Endothelial cell of umbilical vein (primary cell): ENCODE measurements at regions of chr1 and their contacts with region 1.

Region 1: DNA sequence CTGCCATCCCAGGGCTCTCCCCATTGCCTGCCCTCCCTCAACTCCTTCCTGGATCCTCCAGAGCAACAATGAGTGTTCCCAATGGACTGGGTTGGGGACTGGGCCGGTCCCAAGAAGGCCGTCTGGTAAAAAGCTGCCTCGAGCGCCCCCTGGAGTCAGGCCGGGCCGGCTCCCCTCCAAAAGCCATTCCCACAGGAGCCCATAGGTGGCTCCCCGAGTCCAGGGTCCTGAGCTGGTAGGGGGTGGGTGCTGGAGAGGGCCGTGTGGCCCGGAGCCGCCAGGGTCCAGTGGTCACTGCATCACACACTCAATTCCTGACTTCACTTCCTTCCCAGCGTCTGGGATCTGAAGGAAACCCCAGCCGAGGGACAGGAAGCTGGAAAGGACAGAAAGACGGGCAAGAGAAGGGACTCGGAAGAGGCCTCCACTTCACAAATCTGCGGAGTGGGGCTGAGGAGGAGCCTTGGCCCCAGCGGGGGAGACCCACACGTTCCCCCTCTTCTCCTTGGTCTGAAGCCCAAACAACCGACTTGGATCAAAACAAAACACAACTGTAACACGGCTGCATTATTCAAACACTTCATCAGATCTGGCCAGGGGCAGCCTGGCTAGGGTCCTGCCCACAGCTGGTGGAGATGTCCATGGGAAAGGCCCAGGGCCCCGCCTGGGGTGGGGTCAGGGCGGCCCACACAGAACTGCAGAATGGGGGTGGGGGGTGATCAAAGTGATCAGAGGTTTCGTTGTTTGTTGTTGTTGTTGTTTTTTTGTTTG is 10.9 kb upstream of the ALDH4A1 start:
- DNase-seq: peak; percentile 89
- H3K4me3 ChIP-seq: no peak overlapping the region
- H3K27ac ChIP-seq: peak overlapping the region; percentile 96
- H3K4me1 ChIP-seq: peaks cover 11% of the 10 kb centered on the region
- H3K27me3 ChIP-seq: no peaks in the 10 kb centered on the region
- CTCF ChIP-seq: peak; percentile 100
- POLR2A ChIP-seq: no peak

Region 2: DNA sequence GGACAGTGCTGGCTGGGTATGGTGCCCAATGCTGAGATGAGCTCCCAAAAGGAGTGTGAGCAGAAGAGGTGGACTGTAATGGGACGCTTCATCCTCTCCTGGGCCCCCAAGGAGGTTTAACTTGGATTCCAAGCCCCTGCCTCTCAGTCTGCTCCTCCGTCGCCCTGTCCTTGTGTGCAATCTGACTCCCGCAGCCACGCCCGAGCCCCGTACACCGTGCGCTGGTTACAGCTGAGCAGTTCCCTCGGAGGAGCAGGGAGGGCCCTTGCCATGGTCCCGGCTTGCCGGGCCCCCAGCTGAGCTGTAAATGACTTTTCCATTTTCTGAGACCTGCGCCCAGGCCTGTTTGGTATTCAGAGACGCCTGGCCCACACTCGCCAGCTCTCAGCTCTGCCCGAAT is 228.9 kb before region 1 on chr1:
- CTCF ChIA-PET with region 1: no interaction called
- POLR2A ChIA-PET with region 1: no interaction called
- dilution Hi-C with region 1: no loop called
- intact Hi-C with region 1: no loop called
- DNase-seq: no peak
- H3K4me3 ChIP-seq: no peak overlapping the region
- H3K27ac ChIP-seq: no peak overlapping the region
- H3K4me1 ChIP-seq: no peaks in the 10 kb centered on the region
- H3K27me3 ChIP-seq: no peaks in the 10 kb centered on the region
- CTCF ChIP-seq: no peak
- POLR2A ChIP-seq: no peak

Region 3: GRCh38 chr1:18854331-18855025 is 58.8 kb before region 1 on chr1:
- CTCF ChIA-PET with region 1: no interaction called
- POLR2A ChIA-PET with region 1: no interaction called
- dilution Hi-C with region 1: no loop called
- intact Hi-C with region 1: no loop called
- DNase-seq: no peak
- H3K4me3 ChIP-seq: no peak overlapping the region
- H3K27ac ChIP-seq: no peak overlapping the region
- H3K4me1 ChIP-seq: no peaks in the 10 kb centered on the region
- H3K27me3 ChIP-seq: no peaks in the 10 kb centered on the region
- CTCF ChIP-seq: no peak
- POLR2A ChIP-seq: no peak

Region 4: DNA sequence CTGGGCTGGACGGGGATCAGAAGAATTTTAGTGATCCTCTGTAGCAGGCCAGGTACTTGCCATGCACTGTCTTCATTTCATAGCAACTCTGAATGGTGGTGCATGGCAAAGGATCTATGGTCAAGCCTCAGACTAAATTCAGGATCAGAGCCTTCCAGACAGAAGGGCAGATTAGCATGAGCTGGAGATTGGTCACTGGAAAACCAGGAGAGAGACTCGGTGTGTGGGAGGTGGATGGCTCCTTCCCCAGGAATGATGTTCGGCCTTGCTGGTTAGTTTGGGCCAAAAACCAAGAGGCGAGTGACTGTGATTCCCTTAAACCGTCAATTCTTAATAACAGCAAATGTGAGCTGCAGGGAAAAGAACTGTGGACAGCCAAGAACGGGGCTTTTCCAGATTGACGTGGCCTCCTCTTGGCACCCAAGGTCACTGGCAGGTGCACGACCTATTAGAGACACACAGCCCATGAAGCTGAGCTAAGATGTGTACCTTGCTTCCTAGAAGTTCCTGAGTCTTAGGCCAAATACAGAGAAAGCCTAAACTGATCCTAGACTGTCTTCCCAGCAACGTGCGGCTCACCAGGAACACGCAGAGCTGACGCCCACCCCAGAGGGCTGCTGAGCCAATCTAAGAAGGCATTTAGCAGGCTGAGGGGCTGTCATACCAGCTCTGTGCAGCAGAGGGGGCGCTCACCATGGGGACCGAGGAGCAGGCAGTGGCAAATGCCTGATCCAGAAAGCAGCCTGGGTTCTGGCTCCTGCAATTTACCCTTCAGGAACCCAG is 29.4 kb before region 1 on chr1:
- CTCF ChIA-PET with region 1: interaction called, 37 read pairs
- POLR2A ChIA-PET with region 1: no interaction called
- dilution Hi-C with region 1: no loop called
- intact Hi-C with region 1: loop called (anchors 1 kb)
- DNase-seq: peak; percentile 78
- H3K4me3 ChIP-seq: no peak overlapping the region
- H3K27ac ChIP-seq: no peak overlapping the region
- H3K4me1 ChIP-seq: no peaks in the 10 kb centered on the region
- H3K27me3 ChIP-seq: no peaks in the 10 kb centered on the region
- CTCF ChIP-seq: peak; percentile 81 to 95
- POLR2A ChIP-seq: no peak

Region 5: GRCh38 chr1:18941221-18942141 is 28.2 kb after region 1 on chr1:
- CTCF ChIA-PET with region 1: interaction called, 66 read pairs
- POLR2A ChIA-PET with region 1: no interaction called
- dilution Hi-C with region 1: no loop called
- intact Hi-C with region 1: no loop called
- DNase-seq: peak; percentile 63
- H3K4me3 ChIP-seq: no peak overlapping the region
- H3K27ac ChIP-seq: peak overlapping the region; percentile 60
- H3K4me1 ChIP-seq: peaks cover 28% of the 10 kb centered on the region
- H3K27me3 ChIP-seq: no peaks in the 10 kb centered on the region
- CTCF ChIP-seq: no peak
- POLR2A ChIP-seq: no peak

Region 6: DNA sequence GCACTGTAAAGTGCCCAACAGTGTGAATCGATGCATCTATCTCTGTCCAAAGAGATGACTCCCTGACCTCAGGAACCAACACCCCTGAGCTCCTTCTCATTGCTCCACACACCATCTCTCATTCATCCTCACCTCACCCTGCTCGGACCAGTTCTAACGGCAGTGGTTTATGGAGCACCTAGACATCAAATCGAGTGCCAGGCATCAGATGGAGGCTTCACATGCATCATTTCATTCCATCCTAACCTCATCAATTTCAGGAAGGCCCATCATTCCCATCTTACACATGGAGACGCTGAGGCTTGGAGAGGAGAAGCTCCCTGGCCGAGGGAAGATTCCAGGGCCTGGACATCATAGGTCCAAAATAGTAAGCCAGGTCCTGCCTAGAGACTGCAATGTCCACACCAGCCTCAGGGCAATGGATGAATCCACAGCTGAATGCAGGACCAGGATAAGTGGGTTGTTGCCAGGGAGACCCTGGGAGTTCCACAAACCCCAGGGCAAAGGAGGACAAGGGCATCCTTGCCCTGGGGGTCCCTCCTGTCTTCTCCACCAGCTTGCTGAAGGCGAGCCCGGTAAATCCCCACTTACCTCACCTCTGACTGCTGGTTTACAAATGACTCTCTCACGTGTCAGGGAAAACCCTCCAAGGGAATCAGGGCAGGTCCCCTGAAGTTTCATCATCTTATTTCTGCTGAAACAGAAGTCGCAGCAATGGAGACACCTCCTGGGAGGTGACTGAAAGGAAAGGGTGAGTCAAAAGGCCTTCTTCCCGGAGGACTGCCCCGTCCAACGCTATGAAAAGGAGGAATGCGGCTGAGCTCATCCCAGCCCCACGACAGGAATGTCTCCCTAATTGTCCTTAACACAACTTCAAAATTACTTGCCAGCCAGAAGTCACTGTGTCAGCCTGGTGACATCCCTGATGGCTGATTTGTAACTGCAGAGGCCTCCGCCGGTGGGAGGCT is 52.2 kb after region 1 on chr1:
- CTCF ChIA-PET with region 1: interaction called, 137 read pairs
- POLR2A ChIA-PET with region 1: no interaction called
- dilution Hi-C with region 1: no loop called
- intact Hi-C with region 1: no loop called
- DNase-seq: no peak
- H3K4me3 ChIP-seq: no peak overlapping the region
- H3K27ac ChIP-seq: no peak overlapping the region
- H3K4me1 ChIP-seq: no peaks in the 10 kb centered on the region
- H3K27me3 ChIP-seq: peaks cover 1 to 2% of the 10 kb centered on the region in 2 experiments
- CTCF ChIP-seq: no peak
- POLR2A ChIP-seq: no peak

Region 7: DNA sequence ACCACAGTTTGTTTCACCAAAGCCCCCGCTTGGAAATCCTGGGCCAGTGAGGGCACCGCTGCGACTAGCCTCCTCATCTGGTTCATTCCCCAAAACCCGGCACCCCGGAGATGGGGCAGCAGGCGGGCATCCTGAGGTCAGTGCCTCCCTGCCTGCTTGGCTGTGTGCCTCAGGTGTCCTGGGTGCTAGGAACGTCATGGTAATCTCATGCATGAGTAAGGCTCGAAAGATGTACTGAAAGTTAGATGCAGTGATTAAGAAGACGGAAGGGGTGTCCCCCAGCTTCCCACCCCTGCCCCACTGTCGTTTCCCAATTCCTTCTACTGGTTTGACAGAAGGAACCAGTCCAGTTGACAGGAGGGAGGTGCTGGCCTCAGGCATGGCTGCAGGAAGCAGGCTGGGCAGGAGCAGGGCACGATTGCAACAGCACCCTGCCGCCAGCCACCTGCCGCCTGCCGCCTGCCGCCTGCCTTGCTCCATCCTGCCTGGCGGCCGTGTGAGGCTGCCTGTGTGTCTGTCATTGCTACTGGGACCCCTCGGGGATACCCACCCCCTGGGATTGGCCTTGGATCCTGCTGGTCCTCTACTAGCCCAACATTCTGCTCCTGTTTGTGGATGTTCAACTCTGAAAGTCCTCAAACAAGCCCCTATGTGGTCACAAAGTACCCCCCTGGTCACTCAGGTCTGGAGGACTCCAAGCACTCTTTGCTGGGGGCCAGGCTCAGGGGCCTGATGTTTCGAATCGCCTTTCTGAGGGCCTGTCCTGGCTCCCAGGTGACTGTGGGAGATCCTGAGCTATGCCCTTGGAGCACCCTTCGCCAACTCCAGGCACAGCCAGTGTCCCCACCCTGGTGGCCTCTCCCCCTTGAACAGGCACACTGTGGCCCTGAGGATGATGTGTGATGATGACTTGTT is 116.2 kb after region 1 on chr1:
- CTCF ChIA-PET with region 1: interaction called, 10 read pairs
- POLR2A ChIA-PET with region 1: no interaction called
- dilution Hi-C with region 1: no loop called
- intact Hi-C with region 1: no loop called
- DNase-seq: no peak
- H3K4me3 ChIP-seq: no peak overlapping the region
- H3K27ac ChIP-seq: no peak overlapping the region
- H3K4me1 ChIP-seq: no peaks in the 10 kb centered on the region
- H3K27me3 ChIP-seq: peaks cover 0 to 2% of the 10 kb centered on the region in 2 experiments
- CTCF ChIP-seq: no peak
- POLR2A ChIP-seq: no peak

Region 8: GRCh38 chr1:19074902-19075721 is 161.9 kb after region 1 on chr1:
- CTCF ChIA-PET with region 1: interaction called, 59 read pairs
- POLR2A ChIA-PET with region 1: no interaction called
- dilution Hi-C with region 1: no loop called
- intact Hi-C with region 1: no loop called
- DNase-seq: no peak
- H3K4me3 ChIP-seq: no peak overlapping the region
- H3K27ac ChIP-seq: no peak overlapping the region
- H3K4me1 ChIP-seq: no peaks in the 10 kb centered on the region
- H3K27me3 ChIP-seq: no peaks in the 10 kb centered on the region
- CTCF ChIP-seq: no peak
- POLR2A ChIP-seq: no peak

Region 9: DNA sequence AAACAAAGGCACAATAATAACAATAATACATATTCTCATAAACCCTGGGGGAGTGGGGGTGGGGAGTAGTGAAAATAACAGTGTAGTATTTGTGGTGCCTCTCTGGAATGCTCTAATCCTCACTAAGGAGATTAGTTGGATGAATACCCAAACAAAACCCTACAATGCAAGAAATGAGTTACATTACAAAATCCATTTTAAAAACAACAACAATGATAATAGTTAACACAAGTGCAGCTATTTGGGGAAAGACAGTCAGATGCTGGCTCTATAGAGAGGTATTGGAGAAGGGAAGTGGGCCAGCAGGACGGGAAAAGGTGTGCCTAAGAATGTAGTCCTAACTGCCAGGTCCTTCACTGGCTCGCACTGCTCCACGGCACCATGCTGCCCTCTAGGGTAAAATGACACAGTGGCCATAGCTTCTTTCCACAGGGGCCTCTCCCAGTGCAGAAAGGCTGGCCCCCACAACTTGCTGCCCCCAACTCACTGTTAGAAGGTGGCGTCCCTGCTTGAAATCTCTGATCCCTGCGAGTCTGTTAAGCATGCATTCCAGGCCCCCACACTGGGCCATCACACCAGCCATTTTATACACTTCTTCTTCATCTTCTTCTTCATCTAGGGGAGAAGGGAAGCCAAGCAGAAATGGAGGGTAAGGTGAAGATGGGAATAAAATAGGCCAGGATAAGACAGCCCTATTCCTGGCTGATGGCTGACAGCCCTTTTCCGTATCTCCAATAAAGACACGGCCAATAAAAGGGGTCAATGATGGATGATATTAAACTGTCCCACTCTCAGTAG is 183.0 kb after region 1 on chr1:
- CTCF ChIA-PET with region 1: interaction called, 84 read pairs
- POLR2A ChIA-PET with region 1: no interaction called
- dilution Hi-C with region 1: no loop called
- intact Hi-C with region 1: loop called (anchors 1 kb)
- DNase-seq: peak; percentile 55
- H3K4me3 ChIP-seq: no peak overlapping the region
- H3K27ac ChIP-seq: no peak overlapping the region
- H3K4me1 ChIP-seq: no peaks in the 10 kb centered on the region
- H3K27me3 ChIP-seq: no peaks in the 10 kb centered on the region
- CTCF ChIP-seq: peak; percentile 41 to 68
- POLR2A ChIP-seq: no peak

Region 10: DNA sequence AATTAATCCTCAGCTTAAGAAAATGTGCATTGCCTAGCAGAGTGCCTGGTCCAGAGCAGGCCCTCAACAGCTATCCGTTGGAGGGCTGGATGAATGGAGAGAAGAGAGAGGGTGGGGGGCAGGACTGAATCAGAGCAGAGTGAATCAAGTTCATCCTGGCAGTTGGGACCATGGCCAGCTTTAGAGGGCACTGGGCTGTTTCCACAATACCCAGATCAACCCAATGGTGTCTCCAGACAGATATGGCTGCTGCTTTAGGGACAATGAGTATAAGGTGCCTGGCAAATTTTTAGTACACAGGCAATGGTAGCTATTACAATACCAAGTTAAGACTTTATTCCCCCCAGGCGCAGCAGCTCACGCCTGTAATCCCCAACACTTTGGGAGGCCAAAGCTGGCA is 321.0 kb after region 1 on chr1:
- CTCF ChIA-PET with region 1: no interaction called
- POLR2A ChIA-PET with region 1: no interaction called
- dilution Hi-C with region 1: no loop called
- intact Hi-C with region 1: no loop called
- DNase-seq: no peak
- H3K4me3 ChIP-seq: no peak overlapping the region
- H3K27ac ChIP-seq: no peak overlapping the region
- H3K4me1 ChIP-seq: no peaks in the 10 kb centered on the region
- H3K27me3 ChIP-seq: no peaks in the 10 kb centered on the region
- CTCF ChIP-seq: no peak
- POLR2A ChIP-seq: no peak